Common myeloid progenitor, CD34-positive (primary cell): ENCODE measurements at regions of chr10 and their contacts with region 1.

Region 1: GRCh38 chr10:102785621-102786217 is 42.0 kb downstream of the WBP1L start:
- DNase-seq: peak; percentile 81 to 87 (median 86)
- H3K4me3 ChIP-seq: peak overlapping the region in 2 of 7 experiments; percentile 13 to 50
- H3K27ac ChIP-seq: peak overlapping the region; percentile 56 to 82
- H3K4me1 ChIP-seq: peaks cover 17 to 55% (median 36%) of the 10 kb centered on the region in 4 experiments
- H3K27me3 ChIP-seq: no peaks in the 10 kb centered on the region

Region 2: GRCh38 chr10:102796407-102797176 is 10.9 kb after region 1 on chr10:
- CTCF ChIA-PET with region 1: interaction called, 12 read pairs
- POLR2A ChIA-PET with region 1: no interaction called
- DNase-seq: peak in 2 of 3 donors; percentile 69 to 78
- H3K4me3 ChIP-seq: peak overlapping the region in 3 of 7 experiments; percentile 34 to 58 (median 40)
- H3K27ac ChIP-seq: peak overlapping the region; percentile 21 to 67
- H3K4me1 ChIP-seq: peaks cover 18 to 50% (median 29%) of the 10 kb centered on the region in 4 experiments
- H3K27me3 ChIP-seq: no peaks in the 10 kb centered on the region

Region 3: DNA sequence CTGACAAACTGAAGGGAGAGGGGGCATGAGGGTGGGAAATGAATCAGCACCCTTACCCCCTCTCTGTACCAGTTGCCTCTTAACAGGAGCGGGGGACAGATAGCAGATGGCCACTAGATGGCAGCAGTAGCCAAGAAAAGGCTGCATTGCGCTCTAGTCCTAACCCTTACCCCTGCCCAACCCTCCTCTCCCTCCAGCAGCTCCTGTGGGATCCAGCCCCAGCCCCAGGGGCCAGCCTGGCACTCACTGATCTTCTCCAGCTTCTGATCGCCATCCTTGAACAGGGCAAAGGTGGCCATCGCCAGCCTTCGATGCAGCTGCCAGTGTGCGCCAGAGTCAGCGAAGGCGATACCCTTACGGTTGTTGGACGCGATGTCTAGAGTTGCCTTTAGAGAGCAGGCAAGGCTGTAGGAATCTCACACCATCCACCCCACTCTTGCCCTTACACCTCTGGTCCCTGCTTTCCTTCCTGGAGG is 49.3 kb after region 1 on chr10:
- CTCF ChIA-PET with region 1: no interaction called
- POLR2A ChIA-PET with region 1: no interaction called
- DNase-seq: peak; percentile 78 to 89 (median 83)
- H3K4me3 ChIP-seq: no peak overlapping the region
- H3K27ac ChIP-seq: no peak overlapping the region
- H3K4me1 ChIP-seq: peaks cover 0 to 9% (median 6%) of the 10 kb centered on the region in 4 experiments
- H3K27me3 ChIP-seq: peaks cover 0 to 2% (median 0%) of the 10 kb centered on the region in 5 experiments